CD4-positive, alpha-beta memory T cell (primary cell): ENCODE measurements at regions of chr11 and their contacts with region 1.

Region 1: GRCh38 chr11:14892036-14892567 is at the start of gene CYP2R1:
- DNase-seq: peak; percentile 88 to 92 (median 91)
- H3K4me3 ChIP-seq: peak within 1 kb of the TSS; percentile 91 to 96
- H3K4me3 Mint-ChIP-seq: peak within 1 kb of the TSS; percentile 90 to 99 (median 94)
- H3K27ac ChIP-seq: peak within 1 kb of the TSS; percentile 80
- H3K27ac Mint-ChIP-seq: peak within 1 kb of the TSS; percentile 94 to 99 (median 96)
- H3K4me1 ChIP-seq: peaks cover 36% of the 10 kb centered on the region
- H3K4me1 Mint-ChIP-seq: peaks cover 17 to 48% (median 34%) of the 10 kb centered on the region in 4 donors
- H3K27me3 ChIP-seq: no peaks in the 10 kb centered on the region
- H3K27me3 Mint-ChIP-seq: no peaks in the 10 kb centered on the region
- total RNA-seq, gene CYP2R1: 12.1 to 14.7 TPM

Region 2: GRCh38 chr11:13868710-13869397 is 1023.2 kb before region 1 on chr11:
- CTCF ChIA-PET with region 1: no interaction called
- POLR2A ChIA-PET with region 1: no interaction called
- intact Hi-C with region 1: loop called (anchors 10 kb)
- DNase-seq: peak; percentile 80 to 91 (median 84)
- H3K4me3 ChIP-seq: no peak overlapping the region
- H3K4me3 Mint-ChIP-seq: peak overlapping the region in 7 of 8 donors; percentile 1 to 56 (median 43)
- H3K27ac ChIP-seq: peak overlapping the region; percentile 55
- H3K27ac Mint-ChIP-seq: peak overlapping the region; percentile 77 to 97 (median 96)
- H3K4me1 ChIP-seq: peaks cover 32% of the 10 kb centered on the region
- H3K4me1 Mint-ChIP-seq: peaks cover 30 to 49% (median 35%) of the 10 kb centered on the region in 4 donors
- H3K27me3 ChIP-seq: no peaks in the 10 kb centered on the region
- H3K27me3 Mint-ChIP-seq: no peaks in the 10 kb centered on the region

Region 3: GRCh38 chr11:14358729-14359439 is 533.2 kb before region 1 on chr11 and contains the start of gene RRAS2:
- CTCF ChIA-PET with region 1: no interaction called
- POLR2A ChIA-PET with region 1: no interaction called
- intact Hi-C with region 1: loop called (anchors 5 kb)
- DNase-seq: peak; percentile 70 to 79 (median 78)
- H3K4me3 ChIP-seq: peak within 1 kb of the TSS; percentile 52 to 66
- H3K4me3 Mint-ChIP-seq: peak within 1 kb of the TSS; percentile 91 to 99 (median 97)
- H3K27ac ChIP-seq: peak within 1 kb of the TSS; percentile 44
- H3K27ac Mint-ChIP-seq: peak within 1 kb of the TSS; percentile 79 to 98 (median 91)
- H3K4me1 ChIP-seq: peaks cover 16% of the 10 kb centered on the region
- H3K4me1 Mint-ChIP-seq: peaks cover 24 to 37% (median 30%) of the 10 kb centered on the region in 4 donors
- H3K27me3 ChIP-seq: no peaks in the 10 kb centered on the region
- H3K27me3 Mint-ChIP-seq: no peaks in the 10 kb centered on the region
- total RNA-seq, gene RRAS2: 11.4 to 11.8 TPM

Region 4: GRCh38 chr11:14499554-14500180 is 392.4 kb before region 1 on chr11 and contains the start of gene COPB1:
- CTCF ChIA-PET with region 1: interaction called, 3 read pairs
- POLR2A ChIA-PET with region 1: interaction called, 18 read pairs
- intact Hi-C with region 1: loop called (anchors 1 kb)
- DNase-seq: peak; percentile 91 to 95 (median 92)
- H3K4me3 ChIP-seq: peak within 1 kb of the TSS; percentile 76 to 89
- H3K4me3 Mint-ChIP-seq: peak within 1 kb of the TSS; percentile 92 to 100 (median 94)
- H3K27ac ChIP-seq: peak within 1 kb of the TSS; percentile 65
- H3K27ac Mint-ChIP-seq: peak within 1 kb of the TSS; percentile 82 to 100 (median 98)
- H3K4me1 ChIP-seq: peaks cover 49% of the 10 kb centered on the region
- H3K4me1 Mint-ChIP-seq: peaks cover 28 to 57% (median 35%) of the 10 kb centered on the region in 4 donors
- H3K27me3 ChIP-seq: no peaks in the 10 kb centered on the region
- H3K27me3 Mint-ChIP-seq: no peaks in the 10 kb centered on the region
- total RNA-seq, gene COPB1: 79.8 to 82.1 TPM

Region 5: GRCh38 chr11:14519917-14520746 is 372.0 kb before region 1 on chr11 and contains the start of gene PSMA1:
- CTCF ChIA-PET with region 1: interaction called, 6 read pairs
- POLR2A ChIA-PET with region 1: interaction called, 37 read pairs
- intact Hi-C with region 1: loop called (anchors 1 kb)
- DNase-seq: peak; percentile 88 to 96 (median 91)
- H3K4me3 ChIP-seq: peak within 1 kb of the TSS; percentile 63 to 95
- H3K4me3 Mint-ChIP-seq: peak within 1 kb of the TSS; percentile 93 to 99 (median 98)
- H3K27ac ChIP-seq: peak within 1 kb of the TSS; percentile 99
- H3K27ac Mint-ChIP-seq: peak within 1 kb of the TSS; percentile 95 to 98 (median 98)
- H3K4me1 ChIP-seq: peaks cover 27% of the 10 kb centered on the region
- H3K4me1 Mint-ChIP-seq: peaks cover 17 to 41% (median 29%) of the 10 kb centered on the region in 4 donors
- H3K27me3 ChIP-seq: no peaks in the 10 kb centered on the region
- H3K27me3 Mint-ChIP-seq: no peaks in the 10 kb centered on the region
- total RNA-seq, gene PSMA1: 95.8 to 105 TPM

Region 6: DNA sequence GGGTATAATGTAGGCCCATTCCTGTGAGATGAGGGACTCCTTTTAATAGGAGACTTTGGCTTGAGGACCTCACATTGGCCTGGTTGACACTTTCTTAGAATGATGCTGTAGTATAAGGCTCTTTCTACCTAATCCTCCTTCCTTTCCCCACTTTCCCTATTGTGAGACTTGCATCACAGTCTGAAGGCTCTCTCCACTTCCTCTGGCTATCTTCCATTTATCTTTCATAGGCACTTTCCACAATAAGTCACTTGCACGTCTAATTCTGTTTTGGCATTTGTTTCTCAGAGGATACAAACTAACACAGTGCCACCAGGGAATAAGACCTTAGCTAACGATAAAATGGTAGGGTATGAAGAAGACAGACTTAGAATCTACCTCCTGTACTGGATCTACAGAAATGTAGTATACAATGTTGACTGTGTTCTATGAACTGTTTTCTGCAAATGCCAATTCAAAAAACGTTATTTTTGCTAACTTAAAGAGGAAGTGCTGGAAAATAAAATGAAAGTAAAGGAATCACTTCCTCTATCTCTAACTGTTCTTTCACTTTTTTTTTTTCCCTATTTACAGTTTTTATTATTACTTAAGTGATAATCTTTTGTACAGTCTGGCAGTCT is 266.4 kb before region 1 on chr11:
- CTCF ChIA-PET with region 1: interaction called, 12 read pairs
- POLR2A ChIA-PET with region 1: interaction called, 5 read pairs
- intact Hi-C with region 1: no loop called
- DNase-seq: no peak
- H3K4me3 ChIP-seq: no peak overlapping the region
- H3K4me3 Mint-ChIP-seq: peak overlapping the region in 4 of 8 donors; percentile 40 to 59 (median 52)
- H3K27ac ChIP-seq: no peak overlapping the region
- H3K27ac Mint-ChIP-seq: peak overlapping the region in 4 of 7 donors; percentile 11 to 62 (median 51)
- H3K4me1 ChIP-seq: peaks cover 33% of the 10 kb centered on the region
- H3K4me1 Mint-ChIP-seq: peaks cover 34 to 64% (median 49%) of the 10 kb centered on the region in 4 donors
- H3K27me3 ChIP-seq: no peaks in the 10 kb centered on the region
- H3K27me3 Mint-ChIP-seq: no peaks in the 10 kb centered on the region